ENCODE measurements at regions of chr1 and their contacts with region 1.

Region 1: DNA sequence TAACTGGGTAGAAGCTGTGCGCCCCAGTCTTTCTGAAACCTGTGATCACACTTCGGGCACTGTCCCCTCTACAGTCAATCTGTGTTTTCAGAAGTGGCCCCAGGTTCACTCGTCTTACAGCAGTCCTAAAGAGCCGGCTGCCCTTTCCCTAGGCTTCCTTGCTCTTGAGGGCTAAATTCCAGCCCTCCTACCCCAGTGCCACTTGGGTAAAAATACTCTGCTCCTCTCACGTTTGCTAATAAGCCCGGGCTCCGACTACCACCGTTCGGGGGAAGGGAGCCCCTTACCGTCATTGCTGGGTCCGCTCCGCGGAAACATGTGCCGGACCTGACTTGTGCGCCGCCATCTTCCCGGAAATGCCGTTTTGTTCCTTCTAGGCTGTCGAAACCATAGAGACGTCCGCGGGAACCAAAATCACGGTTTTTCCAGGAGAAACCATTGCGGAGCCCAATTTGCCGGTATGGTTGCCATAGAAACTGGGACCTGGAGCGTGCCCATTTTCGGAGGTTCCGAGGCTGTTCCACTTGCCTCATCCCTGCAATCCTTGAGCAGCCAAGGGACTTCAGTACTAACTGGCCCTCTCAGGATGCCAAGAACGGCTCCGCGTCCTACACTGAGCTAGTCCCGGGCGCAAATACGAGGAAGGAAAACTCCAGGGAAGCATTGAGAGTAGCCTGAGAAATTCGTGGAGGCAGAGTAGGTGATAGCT is at the start of gene GPATCH4:
- DNase-seq: peak; percentile 73 to 81
- ATAC-seq: peak; percentile 82 to 93 (median 86)
- H3K4me3 ChIP-seq: peak within 1 kb of the TSS; percentile 95
- H3K27ac ChIP-seq: peak within 1 kb of the TSS; percentile 92
- H3K4me1 ChIP-seq: peaks cover 19% of the 10 kb centered on the region
- H3K27me3 ChIP-seq: no peaks in the 10 kb centered on the region
- CTCF ChIP-seq: no peak
- total RNA-seq, gene GPATCH4: 30.6 to 77.5 (median 69.6) TPM

Region 2: DNA sequence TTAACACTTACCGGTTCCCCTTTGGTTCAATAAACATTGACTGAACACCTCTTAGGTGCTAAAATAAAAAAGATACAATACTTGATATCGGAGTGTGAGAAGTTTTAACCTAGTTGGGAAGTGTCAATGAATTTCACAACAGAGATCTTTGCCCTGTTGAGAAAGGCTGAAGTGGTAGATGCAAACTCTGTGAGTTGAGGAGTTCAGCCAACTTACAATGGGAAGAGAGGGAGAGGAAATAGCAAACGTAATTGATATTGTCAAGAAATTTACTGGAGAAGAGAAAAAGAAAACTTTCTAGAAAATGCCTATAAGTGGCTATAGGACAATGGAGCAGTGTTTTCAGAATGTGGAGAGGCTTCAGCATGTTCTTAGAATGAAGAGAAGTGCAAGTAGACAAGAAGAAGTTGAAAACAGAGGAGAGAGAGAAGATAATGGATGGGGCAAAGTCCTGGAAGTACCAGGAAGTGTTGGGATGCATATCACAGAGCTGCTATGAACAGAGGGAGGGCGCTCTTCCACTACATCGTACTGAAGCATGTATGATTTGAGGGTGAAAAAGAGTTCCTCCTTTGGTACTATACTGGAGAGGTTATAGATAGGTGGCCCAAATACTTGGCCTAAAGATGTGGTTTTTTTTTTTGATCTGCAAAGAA is 149.6 kb before region 1 on chr1:
- intact Hi-C with region 1: loop called in 1 of 2 experiments (anchors 5 kb)
- DNase-seq: no peak
- ATAC-seq: no peak
- H3K4me3 ChIP-seq: no peak overlapping the region
- H3K27ac ChIP-seq: no peak overlapping the region
- H3K4me1 ChIP-seq: peaks cover 3% of the 10 kb centered on the region
- H3K27me3 ChIP-seq: no peaks in the 10 kb centered on the region
- CTCF ChIP-seq: no peak

Region 3: GRCh38 chr1:156510709-156511108 is 90.6 kb before region 1 on chr1:
- intact Hi-C with region 1: loop called in 1 of 2 experiments (anchors 5 kb)
- DNase-seq: peak; percentile 93 to 98
- ATAC-seq: peak; percentile 73 to 78 (median 77)
- H3K4me3 ChIP-seq: no peak overlapping the region
- H3K27ac ChIP-seq: peak overlapping the region; percentile 99
- H3K4me1 ChIP-seq: peaks cover 37% of the 10 kb centered on the region
- H3K27me3 ChIP-seq: no peaks in the 10 kb centered on the region
- CTCF ChIP-seq: no peak

Region 4: DNA sequence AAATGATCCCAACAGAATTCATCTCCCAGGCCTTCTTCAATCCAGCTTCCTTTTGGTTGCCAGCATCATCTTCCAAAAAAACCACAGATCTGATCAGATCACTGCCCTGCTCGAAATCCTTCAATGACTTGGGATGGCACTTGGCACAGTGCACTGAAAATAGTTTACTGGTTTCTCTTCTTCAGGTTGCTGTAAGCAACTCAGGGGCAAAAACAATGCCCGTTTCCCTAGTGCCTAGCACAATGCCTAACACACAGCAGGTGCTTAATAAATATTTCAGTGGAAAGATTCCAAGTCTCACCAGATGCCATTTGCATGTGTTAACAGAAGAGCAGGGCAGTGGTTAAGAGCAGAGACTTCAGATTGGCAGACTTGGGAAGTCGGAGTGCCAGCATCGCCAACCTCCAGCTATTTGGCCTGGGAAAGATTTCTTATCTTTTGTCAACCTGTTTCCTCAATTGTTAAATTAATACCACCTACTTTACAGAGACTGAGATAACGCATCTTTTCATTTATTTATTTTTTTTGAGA is 116.1 kb after region 1 on chr1:
- intact Hi-C with region 1: no loop called
- DNase-seq: no peak
- ATAC-seq: no peak
- H3K4me3 ChIP-seq: no peak overlapping the region
- H3K27ac ChIP-seq: no peak overlapping the region
- H3K4me1 ChIP-seq: no peaks in the 10 kb centered on the region
- H3K27me3 ChIP-seq: no peaks in the 10 kb centered on the region
- CTCF ChIP-seq: no peak

Region 5: DNA sequence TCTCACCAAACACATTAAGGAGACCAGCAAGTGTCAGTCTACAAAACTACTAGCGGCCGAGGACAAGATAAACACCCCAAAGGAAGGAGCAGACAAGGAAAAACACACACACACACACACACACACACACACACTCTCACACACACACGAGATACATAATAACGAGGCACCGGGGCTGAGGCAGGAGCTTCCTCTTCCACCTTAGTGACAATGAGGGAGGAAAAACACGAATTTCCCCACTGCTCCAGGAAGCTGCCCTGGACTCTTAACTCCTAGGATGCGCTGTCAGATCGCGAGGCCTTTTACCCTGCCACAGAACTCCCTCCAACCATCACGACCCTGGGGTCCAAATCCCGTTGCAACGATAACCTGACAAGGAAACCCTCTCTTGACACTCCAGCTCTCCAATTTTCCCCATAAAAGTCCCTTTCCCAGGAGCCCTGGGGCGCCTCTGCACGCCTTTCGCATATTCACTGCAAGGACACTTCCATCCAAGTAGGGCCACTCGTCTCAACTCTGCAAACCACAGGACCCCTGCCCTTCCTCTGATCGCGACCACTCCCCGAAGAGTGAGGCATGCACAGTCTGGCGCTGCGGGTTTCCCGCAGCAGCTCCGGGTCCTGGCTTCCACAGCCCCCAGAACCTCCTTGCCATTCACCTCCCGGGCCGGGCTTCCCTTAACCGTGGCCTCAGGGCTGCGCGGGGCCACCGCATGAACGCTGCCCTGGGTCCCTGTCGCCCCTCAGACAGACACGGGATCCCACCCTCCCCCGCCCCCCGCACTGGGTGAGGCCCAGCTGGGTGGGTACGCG is 536.3 kb after region 1 on chr1:
- intact Hi-C with region 1: no loop called
- DNase-seq: no peak
- ATAC-seq: peak in 1 of 4 donors; percentile 47
- H3K4me3 ChIP-seq: peak overlapping the region; percentile 97
- H3K27ac ChIP-seq: peak overlapping the region; percentile 92
- H3K4me1 ChIP-seq: peaks cover 20% of the 10 kb centered on the region
- H3K27me3 ChIP-seq: no peaks in the 10 kb centered on the region
- CTCF ChIP-seq: no peak

Measured in psoas muscle (tissue), 8 donors.